ENCODE measurements at regions of chr4 and their contacts with region 1.

Region 1: GRCh38 chr4:111641955-111642579 is 503.2 kb upstream of the FAM241A start:
- DNase-seq: peak; percentile 54
- CTCF ChIP-seq: peak; percentile 76

Region 2: DNA sequence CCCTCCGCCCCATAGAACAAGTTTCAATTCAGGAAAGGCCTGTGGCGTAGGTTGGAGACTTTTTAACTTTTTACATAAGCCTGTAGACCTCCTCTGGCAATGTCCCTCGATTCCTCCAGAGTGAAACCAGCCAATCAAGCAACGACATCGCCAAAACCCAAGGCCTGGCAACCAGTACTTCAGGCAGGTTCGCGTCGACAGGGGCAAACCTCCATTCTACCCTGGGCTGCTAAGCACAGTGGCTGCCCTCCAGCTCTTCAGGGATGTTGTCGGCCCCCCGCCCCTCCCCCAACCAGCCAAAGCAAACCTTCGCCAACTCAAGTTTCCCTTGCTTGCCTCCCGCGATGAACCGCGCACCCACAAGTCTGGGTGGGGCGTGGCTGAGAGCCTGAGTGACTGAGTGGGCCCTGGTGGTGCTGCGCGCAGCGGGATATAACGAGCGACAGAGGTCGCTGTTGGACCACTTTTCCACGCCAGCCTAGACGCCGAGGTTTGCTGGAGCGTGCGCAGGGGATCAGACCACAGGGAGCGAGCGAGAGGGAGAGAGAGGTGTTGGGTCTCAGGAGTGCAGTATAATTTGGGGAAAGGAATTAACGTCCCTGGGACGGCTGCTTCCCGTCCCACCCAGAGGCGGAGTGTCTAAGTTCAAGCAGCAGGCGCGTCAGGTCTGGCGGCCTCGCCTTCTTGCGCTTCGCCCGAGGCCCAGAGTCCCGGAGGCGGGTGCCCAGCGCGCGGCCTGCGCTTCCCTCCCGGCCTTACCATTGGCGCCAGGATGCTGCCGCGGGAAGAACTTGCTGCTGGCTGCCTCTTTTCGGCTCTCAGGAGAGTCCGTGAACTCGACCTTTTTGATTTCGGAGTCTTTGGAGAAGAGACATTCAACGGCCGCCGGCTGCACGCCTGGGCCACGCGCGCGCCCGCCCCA is 1010.2 kb before region 1 on chr4:
- in situ Hi-C with region 1: loop called (anchors 25 kb)
- DNase-seq: peak; percentile 87
- CTCF ChIP-seq: peak; percentile 81

Region 3: DNA sequence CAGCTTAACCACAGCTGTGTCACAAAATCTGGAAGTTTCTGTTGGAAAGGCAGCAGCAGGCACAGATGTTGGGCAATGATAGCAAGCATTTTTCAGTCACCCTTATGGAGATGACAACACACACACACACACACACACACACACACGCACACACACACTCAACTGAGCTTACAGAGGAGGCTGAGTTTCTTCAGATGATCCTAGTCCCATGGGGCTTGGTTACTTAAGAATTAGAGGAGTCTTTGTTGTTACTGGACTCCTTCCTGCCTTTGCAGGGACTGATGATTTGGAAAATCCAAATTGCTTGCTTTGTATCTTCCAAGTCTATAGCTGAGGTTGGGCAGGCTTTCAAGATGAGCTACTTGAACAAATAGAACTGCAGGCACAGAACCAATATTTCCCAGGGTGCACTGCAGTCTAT is 279.1 kb before region 1 on chr4:
- in situ Hi-C with region 1: no loop called
- DNase-seq: no peak
- CTCF ChIP-seq: no peak

Region 4: GRCh38 chr4:111847296-111848077 is 205.4 kb after region 1 on chr4:
- in situ Hi-C with region 1: loop called (anchors 25 kb)
- DNase-seq: no peak
- CTCF ChIP-seq: no peak

Region 5: DNA sequence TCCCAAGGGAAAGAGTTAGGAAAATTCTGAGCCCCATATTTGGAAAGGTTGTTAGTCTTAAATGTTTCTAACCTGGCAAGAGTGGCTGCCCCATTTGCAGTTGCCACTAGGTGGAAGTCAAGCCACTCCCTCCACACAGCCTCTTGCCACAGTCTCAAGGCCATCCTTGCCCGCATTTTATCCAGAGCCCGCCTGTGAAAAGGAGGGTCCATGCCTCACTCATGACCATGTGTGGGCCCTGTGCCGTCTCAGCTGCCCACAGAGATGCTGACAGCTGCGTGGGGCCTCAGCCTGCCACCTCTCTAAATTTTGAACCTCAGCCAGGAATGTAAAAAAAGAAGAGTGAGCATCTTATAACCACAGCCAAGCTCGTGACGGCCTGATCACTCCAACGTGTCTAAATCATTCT is 301.7 kb after region 1 on chr4:
- in situ Hi-C with region 1: loop called (anchors 25 kb)
- DNase-seq: peak; percentile 40
- CTCF ChIP-seq: peak; percentile 77

Region 6: GRCh38 chr4:112031712-112032328 is 389.8 kb after region 1 on chr4:
- in situ Hi-C with region 1: loop called (anchors 25 kb)
- DNase-seq: peak; percentile 39
- CTCF ChIP-seq: peak; percentile 76

Measured in GM13977 (cell line).